ENCODE measurements at regions of chr13 and their contacts with region 1.

Region 1: GRCh38 chr13:36858290-36858689 is 39.3 kb downstream of the RFXAP start:
- DNase-seq: no peak
- ATAC-seq: peak; percentile 91
- H3K4me3 ChIP-seq: no peak overlapping the region
- H3K27ac ChIP-seq: no peak overlapping the region
- H3K4me1 ChIP-seq: no peaks in the 10 kb centered on the region
- H3K27me3 ChIP-seq: no peaks in the 10 kb centered on the region; a peak in 1 of 4 replicates
- CTCF ChIP-seq: peak; percentile 33 to 64 (median 34); a peak in 3 of 6 replicates
- EP300 ChIP-seq: no peak
- POLR2A ChIP-seq: no peak
- RAD21 ChIP-seq: peak; percentile 58

Region 2: GRCh38 chr13:36973621-36974295 is 115.5 kb after region 1 on chr13:
- CTCF ChIA-PET with region 1: interaction called, 100 read pairs
- POLR2A ChIA-PET with region 1: no interaction called
- RAD21 ChIA-PET with region 1: interaction called, 5 read pairs
- SMC1A ChIA-PET with region 1: no interaction called
- in situ Hi-C with region 1: no loop called
- intact Hi-C with region 1: no loop called
- DNase-seq: no peak
- ATAC-seq: peak; percentile 92
- H3K4me3 ChIP-seq: no peak overlapping the region
- H3K27ac ChIP-seq: no peak overlapping the region
- H3K4me1 ChIP-seq: peaks cover 7% of the 10 kb centered on the region; the same call in 1 of the 2 replicates
- H3K27me3 ChIP-seq: no peaks in the 10 kb centered on the region
- CTCF ChIP-seq: no peak
- EP300 ChIP-seq: no peak
- POLR2A ChIP-seq: no peak
- RAD21 ChIP-seq: no peak

Region 3: GRCh38 chr13:36981156-36981743 is 123.0 kb after region 1 on chr13:
- CTCF ChIA-PET with region 1: interaction called, 100 read pairs
- POLR2A ChIA-PET with region 1: no interaction called
- RAD21 ChIA-PET with region 1: interaction called, 37 read pairs
- SMC1A ChIA-PET with region 1: interaction called, 14 read pairs
- in situ Hi-C with region 1: loop called (anchors 5 kb)
- intact Hi-C with region 1: loop called (anchors 1 kb)
- DNase-seq: no peak
- ATAC-seq: peak; percentile 74
- H3K4me3 ChIP-seq: no peak overlapping the region
- H3K27ac ChIP-seq: no peak overlapping the region
- H3K4me1 ChIP-seq: no peaks in the 10 kb centered on the region
- H3K27me3 ChIP-seq: no peaks in the 10 kb centered on the region
- CTCF ChIP-seq: peak; percentile 25 to 59 (median 47); a peak in 5 of 6 replicates
- EP300 ChIP-seq: no peak
- POLR2A ChIP-seq: no peak
- RAD21 ChIP-seq: peak; percentile 61

Region 4: GRCh38 chr13:37068962-37069361 is 210.7 kb after region 1 on chr13:
- CTCF ChIA-PET with region 1: interaction called, 7 read pairs
- POLR2A ChIA-PET with region 1: no interaction called
- RAD21 ChIA-PET with region 1: interaction called, 3 read pairs
- SMC1A ChIA-PET with region 1: interaction called, 5 read pairs
- in situ Hi-C with region 1: loop called (anchors 10 kb)
- intact Hi-C with region 1: loop called (anchors 10 kb)
- DNase-seq: no peak
- ATAC-seq: peak; percentile 52; the same call in 2 of the 3 replicates
- H3K4me3 ChIP-seq: no peak overlapping the region
- H3K27ac ChIP-seq: no peak overlapping the region
- H3K4me1 ChIP-seq: no peaks in the 10 kb centered on the region
- H3K27me3 ChIP-seq: no peaks in the 10 kb centered on the region; a peak in 1 of 4 replicates
- CTCF ChIP-seq: peak in 2 of 3 experiments; percentile 4 to 29; a peak in 2 of 6 replicates
- EP300 ChIP-seq: no peak
- POLR2A ChIP-seq: no peak
- RAD21 ChIP-seq: peak; percentile 36

Measured in GM12878 (cell line).